ENCODE measurements at regions of chr9 and their contacts with region 1.

Region 1: DNA sequence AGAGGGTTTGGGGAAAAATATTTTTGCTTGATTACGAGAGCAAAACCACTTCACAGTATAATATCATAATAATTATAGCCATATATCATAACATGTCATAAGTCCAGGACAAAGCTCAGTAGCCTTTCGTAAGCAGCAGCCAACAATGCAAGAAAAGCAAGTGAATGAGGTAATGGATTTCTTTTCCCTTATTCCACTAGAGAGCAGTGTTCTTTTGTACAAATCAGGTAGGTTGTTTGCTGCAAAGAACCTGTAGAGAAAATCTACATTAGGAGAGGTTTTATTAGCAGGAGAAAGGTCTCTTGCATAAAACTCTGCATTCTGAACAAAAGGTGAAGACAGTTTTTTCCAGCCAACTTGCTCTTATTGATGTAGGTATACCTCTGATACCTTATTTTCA is 1033.4 kb downstream of the TLE4 start:
- DNase-seq: peak; percentile 49
- ATAC-seq: no peak
- H3K4me3 ChIP-seq: no peak overlapping the region
- H3K27ac ChIP-seq: no peak overlapping the region
- H3K4me1 ChIP-seq: no peaks in the 10 kb centered on the region
- H3K27me3 ChIP-seq: no peaks in the 10 kb centered on the region
- CTCF ChIP-seq: peak; percentile 53

Region 2: DNA sequence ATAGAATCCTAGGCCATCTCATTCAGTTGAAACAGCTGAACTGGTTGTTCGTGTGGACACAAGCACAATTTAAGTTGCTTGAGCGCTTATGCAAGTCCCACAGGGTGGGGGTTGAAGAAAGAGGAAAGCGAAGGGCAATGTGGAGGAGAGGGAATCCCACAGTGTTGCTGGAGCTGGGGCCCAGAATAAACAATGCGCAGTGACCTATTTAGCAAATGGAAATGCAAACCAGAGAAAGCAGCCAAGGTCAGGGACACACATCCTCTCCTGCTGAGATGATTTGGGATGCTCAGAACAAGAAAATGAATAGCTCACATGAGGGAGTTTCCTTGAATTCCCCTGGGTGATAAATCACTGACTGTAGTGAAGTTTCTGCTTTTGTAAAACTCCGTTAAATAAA is 195.0 kb before region 1 on chr9:
- CTCF ChIA-PET with region 1: no interaction called
- POLR2A ChIA-PET with region 1: no interaction called
- intact Hi-C with region 1: no loop called
- DNase-seq: no peak
- ATAC-seq: no peak
- H3K4me3 ChIP-seq: no peak overlapping the region
- H3K27ac ChIP-seq: no peak overlapping the region
- H3K4me1 ChIP-seq: no peaks in the 10 kb centered on the region
- H3K27me3 ChIP-seq: no peaks in the 10 kb centered on the region
- CTCF ChIP-seq: no peak

Region 3: GRCh38 chr9:80699511-80699998 is 94.4 kb after region 1 on chr9:
- CTCF ChIA-PET with region 1: no interaction called
- POLR2A ChIA-PET with region 1: no interaction called
- intact Hi-C with region 1: loop called (anchors 1 kb)
- DNase-seq: peak; percentile 84
- ATAC-seq: peak; percentile 93
- H3K4me3 ChIP-seq: peak overlapping the region; percentile 46; the same call in 1 of the 2 replicates
- H3K27ac ChIP-seq: peak overlapping the region; percentile 79
- H3K4me1 ChIP-seq: peaks cover 22% of the 10 kb centered on the region
- H3K27me3 ChIP-seq: no peaks in the 10 kb centered on the region
- CTCF ChIP-seq: no peak

Region 4: GRCh38 chr9:80885894-80886293 is 280.8 kb after region 1 on chr9:
- CTCF ChIA-PET with region 1: no interaction called
- POLR2A ChIA-PET with region 1: no interaction called
- intact Hi-C with region 1: loop called (anchors 5 kb)
- DNase-seq: peak; percentile 13
- ATAC-seq: 0 out of 2 replicates have a peak, but pooled peaks have one; percentile 33
- H3K4me3 ChIP-seq: no peak overlapping the region
- H3K27ac ChIP-seq: no peak overlapping the region
- H3K4me1 ChIP-seq: no peaks in the 10 kb centered on the region
- H3K27me3 ChIP-seq: no peaks in the 10 kb centered on the region
- CTCF ChIP-seq: no peak; the same call in 1 of the 2 replicates

Region 5: DNA sequence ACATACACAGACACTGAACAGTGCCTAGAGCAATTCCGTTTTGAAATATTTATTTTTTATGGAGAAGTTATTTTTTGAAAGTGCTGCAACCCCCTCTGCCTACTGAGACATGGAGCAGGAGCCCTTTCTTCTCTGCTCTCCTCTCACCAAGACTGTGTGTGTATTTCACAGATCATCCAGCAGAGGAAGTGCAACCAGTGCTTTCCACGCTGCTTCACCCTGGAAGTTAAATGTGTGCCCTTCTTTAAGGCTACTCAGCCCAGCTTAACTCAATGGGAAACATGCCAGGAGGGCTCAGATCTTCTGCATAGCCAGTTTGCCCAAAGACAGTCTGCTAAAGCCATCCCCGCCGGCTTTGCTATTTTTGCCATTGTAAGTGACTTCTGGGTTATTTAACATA is 477.9 kb after region 1 on chr9:
- CTCF ChIA-PET with region 1: no interaction called
- POLR2A ChIA-PET with region 1: no interaction called
- intact Hi-C with region 1: loop called (anchors 10 kb)
- DNase-seq: peak; percentile 37
- ATAC-seq: peak; percentile 24; the same call in 1 of the 2 replicates
- H3K4me3 ChIP-seq: no peak overlapping the region
- H3K27ac ChIP-seq: peak overlapping the region; percentile 52
- H3K4me1 ChIP-seq: peaks cover 23% of the 10 kb centered on the region
- H3K27me3 ChIP-seq: no peaks in the 10 kb centered on the region
- CTCF ChIP-seq: no peak; the same call in 1 of the 2 replicates